ENCODE measurements at regions of chr9 and their contacts with region 1.

Region 1: DNA sequence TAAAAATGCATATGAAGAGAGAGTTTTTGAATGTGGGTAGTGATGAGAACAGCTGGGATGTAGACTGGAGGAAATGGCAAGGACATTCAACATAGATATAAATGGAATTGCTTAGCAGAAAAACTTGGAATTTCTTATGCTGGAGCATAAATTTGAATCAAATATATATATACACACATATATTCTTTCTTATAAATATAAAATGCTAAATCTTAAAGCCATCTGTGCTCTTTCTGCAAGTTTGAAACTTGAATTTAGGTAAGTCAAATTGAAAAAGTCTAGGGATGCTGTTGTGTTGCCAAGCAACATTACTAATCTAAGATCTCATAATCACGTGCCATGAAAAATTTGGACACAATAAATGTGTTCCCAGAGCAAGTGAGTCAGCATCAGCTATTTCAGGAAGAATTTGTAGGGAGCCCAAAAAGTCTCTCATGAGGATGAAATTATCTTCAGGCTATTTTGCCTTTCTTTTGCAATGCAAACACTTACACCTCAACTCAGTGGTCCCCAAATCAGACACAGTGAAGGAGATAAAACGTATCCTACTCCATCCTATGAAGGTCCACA is 58.4 kb upstream of the ALDH1A1 start:
- DNase-seq: no peak
- H3K4me3 ChIP-seq: no peak overlapping the region
- H3K27ac ChIP-seq: no peak overlapping the region
- H3K4me1 ChIP-seq: peaks cover 20 to 47% (median 41%) of the 10 kb centered on the region in 4 experiments
- H3K27me3 ChIP-seq: no peaks in the 10 kb centered on the region

Region 2: DNA sequence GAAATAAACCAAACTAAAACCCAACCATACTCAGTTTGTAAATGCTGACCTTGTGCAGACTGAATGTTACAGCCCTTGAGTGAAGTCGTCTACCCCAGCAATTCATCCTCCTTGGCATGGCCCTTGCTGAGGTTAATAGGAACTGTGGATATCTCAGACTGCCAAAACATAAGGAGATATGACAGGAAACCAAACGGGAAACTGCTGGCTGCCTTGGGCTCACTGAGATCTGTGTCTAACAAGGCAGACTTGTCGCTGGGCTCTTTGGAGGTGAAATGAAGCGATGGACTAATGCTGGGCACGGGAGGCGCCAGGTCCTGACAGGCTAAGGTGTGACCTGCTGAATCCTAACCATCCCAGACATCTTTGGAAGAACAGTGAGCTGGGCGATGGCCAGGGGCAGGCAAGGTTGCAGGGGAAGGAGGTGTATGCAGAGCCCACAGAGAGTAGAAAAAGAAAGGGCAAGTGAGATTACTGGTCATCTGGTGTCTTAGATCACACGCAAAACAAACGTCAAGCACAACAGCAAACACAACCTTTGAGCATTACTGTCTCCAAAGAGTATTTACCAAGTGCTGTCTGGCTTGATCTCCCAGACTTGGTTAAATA is 13.8 kb before region 1 on chr9:
- CTCF ChIA-PET with region 1: interaction called, 25 read pairs
- POLR2A ChIA-PET with region 1: interaction called, 3 read pairs
- DNase-seq: peak; percentile 74 to 87 (median 79)
- H3K4me3 ChIP-seq: peak overlapping the region in 6 of 7 experiments; percentile 52 to 74 (median 63)
- H3K27ac ChIP-seq: peak overlapping the region; percentile 70 to 87
- H3K4me1 ChIP-seq: peaks cover 8 to 38% (median 16%) of the 10 kb centered on the region in 4 experiments
- H3K27me3 ChIP-seq: no peaks in the 10 kb centered on the region